OCI-LY7 (cell line): ENCODE measurements at regions of chr6 and their contacts with region 1.

Region 1: GRCh38 chr6:166275714-166276166 is 32.5 kb downstream of the PRR18 start:
- DNase-seq: peak; percentile 75
- H3K4me3 ChIP-seq: no peak overlapping the region
- H3K27ac ChIP-seq: no peak overlapping the region
- H3K4me1 ChIP-seq: peaks cover 14% of the 10 kb centered on the region
- CTCF ChIP-seq: peak; percentile 100

Region 2: GRCh38 chr6:165884813-165885765 is 390.7 kb before region 1 on chr6:
- CTCF ChIA-PET with region 1: no interaction called
- POLR2A ChIA-PET with region 1: no interaction called
- intact Hi-C with region 1: loop called (anchors 5 kb)
- DNase-seq: peak; percentile 72
- H3K4me3 ChIP-seq: no peak overlapping the region
- H3K27ac ChIP-seq: no peak overlapping the region
- H3K4me1 ChIP-seq: no peaks in the 10 kb centered on the region
- CTCF ChIP-seq: peak; percentile 93

Region 3: GRCh38 chr6:165895421-165896165 is 380.1 kb before region 1 on chr6:
- CTCF ChIA-PET with region 1: no interaction called
- POLR2A ChIA-PET with region 1: no interaction called
- intact Hi-C with region 1: no loop called
- DNase-seq: no peak
- H3K4me3 ChIP-seq: no peak overlapping the region
- H3K27ac ChIP-seq: no peak overlapping the region
- H3K4me1 ChIP-seq: no peaks in the 10 kb centered on the region
- CTCF ChIP-seq: no peak

Region 4: GRCh38 chr6:166025149-166025898 is 250.4 kb before region 1 on chr6:
- CTCF ChIA-PET with region 1: no interaction called
- POLR2A ChIA-PET with region 1: no interaction called
- intact Hi-C with region 1: no loop called
- DNase-seq: no peak
- H3K4me3 ChIP-seq: no peak overlapping the region
- H3K27ac ChIP-seq: no peak overlapping the region
- H3K4me1 ChIP-seq: no peaks in the 10 kb centered on the region
- CTCF ChIP-seq: no peak

Region 5: GRCh38 chr6:166106076-166106686 is 169.6 kb before region 1 on chr6:
- CTCF ChIA-PET with region 1: no interaction called
- POLR2A ChIA-PET with region 1: no interaction called
- intact Hi-C with region 1: loop called (anchors 2 kb)
- DNase-seq: peak; percentile 76
- H3K4me3 ChIP-seq: no peak overlapping the region
- H3K27ac ChIP-seq: no peak overlapping the region
- H3K4me1 ChIP-seq: peaks cover 4% of the 10 kb centered on the region
- CTCF ChIP-seq: peak; percentile 98

Region 6: DNA sequence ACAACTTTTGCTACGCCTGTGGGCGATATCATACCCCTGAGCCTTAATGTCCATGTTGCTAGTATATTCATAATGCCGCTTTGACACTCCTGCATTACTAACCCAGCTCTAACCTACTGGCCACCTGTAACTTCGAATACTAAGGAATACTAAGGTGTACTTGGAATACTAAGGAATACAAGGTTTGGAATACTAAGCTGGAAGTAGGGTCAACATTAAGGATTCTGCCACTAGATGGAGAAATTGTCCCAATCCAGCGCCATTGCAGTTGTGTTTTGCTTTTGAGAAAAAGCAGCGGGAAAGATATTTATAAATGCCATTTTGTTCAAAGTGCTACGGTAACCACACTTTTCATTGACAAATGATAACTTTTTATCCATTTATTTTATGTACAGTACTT is 118.8 kb before region 1 on chr6:
- CTCF ChIA-PET with region 1: no interaction called
- POLR2A ChIA-PET with region 1: interaction called, 5 read pairs
- intact Hi-C with region 1: loop called (anchors 1 kb)
- DNase-seq: no peak
- H3K4me3 ChIP-seq: no peak overlapping the region
- H3K27ac ChIP-seq: no peak overlapping the region
- H3K4me1 ChIP-seq: peaks cover 17% of the 10 kb centered on the region
- CTCF ChIP-seq: peak; percentile 74

Region 7: DNA sequence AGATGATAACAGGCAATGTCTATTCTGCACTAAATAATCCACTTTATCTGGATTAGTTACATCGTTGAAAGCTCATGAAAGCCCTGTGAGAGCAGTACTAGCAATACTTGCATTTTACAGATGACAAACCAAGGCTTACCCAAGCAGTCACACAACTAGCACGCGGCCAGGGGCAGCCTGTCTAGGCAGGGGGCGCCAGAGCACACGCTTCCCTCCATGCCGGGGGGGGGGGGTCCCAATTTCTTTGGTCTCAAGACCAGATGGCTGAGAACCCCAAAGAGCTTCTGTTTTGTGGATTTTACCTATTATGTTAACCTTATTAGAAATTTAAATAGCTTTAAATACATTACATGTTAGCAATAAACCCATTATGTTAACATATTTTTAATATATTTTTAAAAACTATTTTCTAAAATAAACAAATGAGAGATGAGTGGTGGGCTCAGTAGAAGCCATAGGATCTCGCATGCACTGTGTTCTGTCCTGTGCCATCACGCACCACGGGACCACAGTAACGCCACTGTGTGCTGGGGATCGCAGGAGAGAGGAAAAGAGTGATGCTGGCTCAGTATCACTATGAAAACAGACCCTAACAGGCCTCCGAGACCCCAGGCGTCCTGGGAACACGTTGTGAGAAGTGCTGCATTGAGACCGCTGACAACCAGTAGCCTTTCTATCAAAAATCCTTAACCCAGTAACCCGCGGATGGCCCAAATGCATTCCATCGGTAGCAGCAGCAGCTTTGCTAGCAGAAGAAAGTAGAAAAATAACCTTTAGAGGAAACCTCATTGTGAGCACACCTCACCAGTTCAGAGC is 37.7 kb after region 1 on chr6:
- CTCF ChIA-PET with region 1: no interaction called
- POLR2A ChIA-PET with region 1: interaction called, 8 read pairs
- intact Hi-C with region 1: loop called (anchors 1 kb)
- DNase-seq: peak; percentile 67
- H3K4me3 ChIP-seq: no peak overlapping the region
- H3K27ac ChIP-seq: no peak overlapping the region
- H3K4me1 ChIP-seq: peaks cover 9% of the 10 kb centered on the region
- CTCF ChIP-seq: peak; percentile 96

Region 8: GRCh38 chr6:166382933-166383801 is 107.4 kb after region 1 on chr6 and contains the start of gene MPC1:
- CTCF ChIA-PET with region 1: interaction called, 3 read pairs
- POLR2A ChIA-PET with region 1: interaction called, 4 read pairs
- intact Hi-C with region 1: loop called (anchors 1 kb)
- DNase-seq: peak; percentile 96
- H3K4me3 ChIP-seq: peak within 1 kb of the TSS; percentile 85
- H3K27ac ChIP-seq: peak within 1 kb of the TSS; percentile 62
- H3K4me1 ChIP-seq: peaks cover 12% of the 10 kb centered on the region
- CTCF ChIP-seq: no peak
- total RNA-seq, gene MPC1: 36.1 and 38.9 TPM in 2 replicates

Region 9: DNA sequence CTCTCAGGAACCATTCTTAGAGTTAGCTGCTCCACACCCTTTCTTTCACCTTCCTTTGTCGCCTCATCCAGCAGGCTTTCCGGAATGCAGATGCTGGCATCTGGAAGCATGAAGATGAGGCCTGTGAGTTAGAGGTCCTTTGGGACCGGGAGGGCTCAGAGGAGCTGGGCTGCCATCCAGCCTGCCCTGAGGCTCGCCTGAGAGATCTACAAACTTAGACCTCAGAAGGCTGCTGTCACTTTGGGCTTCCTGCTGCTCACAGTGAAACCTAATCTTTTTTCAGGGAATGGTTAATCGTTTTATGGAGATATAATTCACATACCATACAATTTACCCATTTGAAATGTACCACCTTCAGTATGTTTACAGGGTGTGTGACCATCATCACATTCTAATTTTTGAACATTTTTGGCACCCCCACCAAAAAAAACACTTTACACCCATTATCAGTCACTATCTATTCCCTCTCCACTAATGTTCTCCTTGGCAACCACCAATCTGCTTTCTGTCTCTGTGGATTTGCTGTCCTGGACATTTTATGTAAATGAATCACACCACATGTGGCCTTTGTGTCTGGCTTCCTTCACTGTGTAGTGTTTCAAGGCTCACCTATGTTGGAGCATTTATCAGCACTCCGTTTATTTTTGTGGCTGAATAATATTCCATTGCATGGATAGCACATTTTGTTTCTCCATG is 127.0 kb after region 1 on chr6:
- CTCF ChIA-PET with region 1: interaction called, 6 read pairs
- POLR2A ChIA-PET with region 1: interaction called, 3 read pairs
- intact Hi-C with region 1: loop called (anchors 1 kb)
- DNase-seq: no peak
- H3K4me3 ChIP-seq: no peak overlapping the region
- H3K27ac ChIP-seq: no peak overlapping the region
- H3K4me1 ChIP-seq: peaks cover 4% of the 10 kb centered on the region
- CTCF ChIP-seq: no peak